CD14-positive monocyte (primary cell): ENCODE measurements at regions of chr22 and their contacts with region 1.

Region 1: GRCh38 chr22:24938741-24939341 is 7.7 kb downstream of the LHFPL7 start:
- DNase-seq: peak in 1 of 3 donors; percentile 12
- H3K4me3 ChIP-seq: no peak overlapping the region
- H3K4me3 Mint-ChIP-seq: no peak overlapping the region
- H3K27ac ChIP-seq: no peak overlapping the region
- H3K27ac Mint-ChIP-seq: no peak overlapping the region
- H3K4me1 ChIP-seq: no peaks in the 10 kb centered on the region
- H3K4me1 Mint-ChIP-seq: no peaks in the 10 kb centered on the region
- H3K27me3 ChIP-seq: no peaks in the 10 kb centered on the region
- H3K27me3 Mint-ChIP-seq: peaks cover 0 to 4% (median 1%) of the 10 kb centered on the region in 3 donors
- CTCF ChIP-seq: peak; percentile 83

Region 2: GRCh38 chr22:24965822-24966626 is 27.2 kb after region 1 on chr22:
- intact Hi-C with region 1: no loop called
- DNase-seq: no peak
- H3K4me3 ChIP-seq: no peak overlapping the region
- H3K4me3 Mint-ChIP-seq: no peak overlapping the region
- H3K27ac ChIP-seq: no peak overlapping the region
- H3K27ac Mint-ChIP-seq: no peak overlapping the region
- H3K4me1 ChIP-seq: no peaks in the 10 kb centered on the region
- H3K4me1 Mint-ChIP-seq: no peaks in the 10 kb centered on the region
- H3K27me3 ChIP-seq: no peaks in the 10 kb centered on the region
- H3K27me3 Mint-ChIP-seq: peaks cover 0 to 7% (median 0%) of the 10 kb centered on the region in 3 donors
- CTCF ChIP-seq: no peak

Region 3: DNA sequence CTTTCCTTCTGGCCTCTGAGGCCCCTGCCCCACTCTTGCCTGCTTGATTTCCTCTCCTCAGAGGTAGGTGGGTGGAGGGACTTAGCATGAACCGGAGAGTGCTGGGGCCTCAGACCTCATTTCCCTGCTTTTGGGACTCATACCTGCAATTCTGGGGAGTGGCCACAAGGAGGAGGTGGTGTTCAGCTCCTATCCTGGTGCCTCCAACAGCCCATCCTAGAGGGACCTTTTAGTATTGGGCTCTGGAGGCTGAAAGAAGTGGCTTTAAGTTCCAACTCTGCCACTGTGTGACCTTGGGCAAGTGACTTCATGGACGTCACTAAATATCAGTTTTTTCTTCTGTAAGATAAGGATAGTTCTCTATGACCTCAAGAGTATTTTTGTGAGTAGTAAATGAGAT is 112.2 kb after region 1 on chr22:
- intact Hi-C with region 1: loop called (anchors 5 to 10 kb)
- DNase-seq: no peak
- H3K4me3 ChIP-seq: no peak overlapping the region
- H3K4me3 Mint-ChIP-seq: no peak overlapping the region
- H3K27ac ChIP-seq: no peak overlapping the region
- H3K27ac Mint-ChIP-seq: no peak overlapping the region
- H3K4me1 ChIP-seq: peaks cover 0 to 4% of the 10 kb centered on the region in 2 donors
- H3K4me1 Mint-ChIP-seq: peaks cover 4% of the 10 kb centered on the region
- H3K27me3 ChIP-seq: no peaks in the 10 kb centered on the region
- H3K27me3 Mint-ChIP-seq: peaks cover 2 to 6% (median 5%) of the 10 kb centered on the region in 3 donors
- CTCF ChIP-seq: peak; percentile 25

Region 4: GRCh38 chr22:25057013-25057881 is 118.4 kb after region 1 on chr22:
- intact Hi-C with region 1: loop called (anchors 5 to 10 kb)
- DNase-seq: peak in 2 of 3 donors; percentile 0 to 12
- H3K4me3 ChIP-seq: no peak overlapping the region
- H3K4me3 Mint-ChIP-seq: no peak overlapping the region
- H3K27ac ChIP-seq: no peak overlapping the region
- H3K27ac Mint-ChIP-seq: no peak overlapping the region
- H3K4me1 ChIP-seq: no peaks in the 10 kb centered on the region
- H3K4me1 Mint-ChIP-seq: peaks cover 2% of the 10 kb centered on the region
- H3K27me3 ChIP-seq: peaks cover 0 to 4% of the 10 kb centered on the region in 2 donors
- H3K27me3 Mint-ChIP-seq: peaks cover 2 to 12% (median 7%) of the 10 kb centered on the region in 3 donors
- CTCF ChIP-seq: peak; percentile 82